Activated CD8-positive, alpha-beta memory T cell treated with anti-CD3 and anti-CD28 coated beads, Interleukin-2, amount 10 ng/mL, durations not matched to agents 7 days and 5 days (primary cell): ENCODE measurements at regions of chr12 and their contacts with region 1.

Region 1: DNA sequence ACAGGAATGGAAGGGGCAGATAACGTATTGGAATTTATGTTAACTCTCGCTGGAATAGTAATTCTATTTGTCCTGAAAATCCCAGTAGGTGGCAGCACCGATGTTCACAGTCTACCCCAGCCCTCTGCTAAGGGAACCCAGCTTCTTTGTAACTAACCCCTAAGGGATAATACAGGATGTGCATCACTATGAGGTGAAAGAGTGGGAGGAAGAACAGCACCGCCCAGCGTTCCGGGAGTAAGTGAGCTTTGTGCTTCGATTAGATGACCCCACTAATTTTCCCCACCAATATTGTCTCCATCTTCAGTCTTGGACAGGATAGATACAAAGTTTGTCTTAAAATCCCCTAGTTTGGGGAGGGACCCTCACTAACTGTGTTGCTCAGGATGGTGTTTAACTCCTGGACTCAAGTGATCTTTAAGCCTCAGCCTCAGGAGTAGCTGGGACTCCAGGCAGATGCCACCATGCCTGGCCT is 2.7 kb downstream of the SLC2A3 start:
- DNase-seq: peak; percentile 89
- ATAC-seq: peak; percentile 68
- H3K4me3 Mint-ChIP-seq: no peak overlapping the region
- H3K27ac Mint-ChIP-seq: no peak overlapping the region
- H3K4me1 Mint-ChIP-seq: peaks cover 32% of the 10 kb centered on the region
- H3K27me3 Mint-ChIP-seq: no peaks in the 10 kb centered on the region

Region 2: DNA sequence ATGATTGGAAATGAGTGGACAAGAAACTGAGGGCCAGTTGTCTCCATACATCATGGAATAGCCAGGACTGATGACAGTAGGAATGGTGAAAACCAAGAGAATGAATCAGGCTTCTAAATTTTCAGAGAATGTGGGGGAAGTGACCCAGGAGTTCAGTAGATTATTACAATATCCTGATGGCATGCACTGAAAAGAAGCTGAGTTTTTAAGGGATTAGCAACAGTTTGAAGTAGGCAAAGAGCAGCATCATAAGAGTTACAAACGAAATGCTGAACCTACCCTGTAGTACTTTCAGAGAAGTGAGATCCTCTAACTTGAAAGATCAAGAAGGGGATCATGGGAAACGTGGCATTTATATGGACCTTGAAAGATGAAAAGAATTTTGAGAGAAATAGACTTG is 73.7 kb before region 1 on chr12:
- CTCF ChIA-PET with region 1: interaction called, 12 read pairs
- DNase-seq: no peak
- ATAC-seq: no peak
- H3K4me3 Mint-ChIP-seq: no peak overlapping the region
- H3K27ac Mint-ChIP-seq: no peak overlapping the region
- H3K4me1 Mint-ChIP-seq: peaks cover 16% of the 10 kb centered on the region
- H3K27me3 Mint-ChIP-seq: peaks cover 21% of the 10 kb centered on the region

Region 3: DNA sequence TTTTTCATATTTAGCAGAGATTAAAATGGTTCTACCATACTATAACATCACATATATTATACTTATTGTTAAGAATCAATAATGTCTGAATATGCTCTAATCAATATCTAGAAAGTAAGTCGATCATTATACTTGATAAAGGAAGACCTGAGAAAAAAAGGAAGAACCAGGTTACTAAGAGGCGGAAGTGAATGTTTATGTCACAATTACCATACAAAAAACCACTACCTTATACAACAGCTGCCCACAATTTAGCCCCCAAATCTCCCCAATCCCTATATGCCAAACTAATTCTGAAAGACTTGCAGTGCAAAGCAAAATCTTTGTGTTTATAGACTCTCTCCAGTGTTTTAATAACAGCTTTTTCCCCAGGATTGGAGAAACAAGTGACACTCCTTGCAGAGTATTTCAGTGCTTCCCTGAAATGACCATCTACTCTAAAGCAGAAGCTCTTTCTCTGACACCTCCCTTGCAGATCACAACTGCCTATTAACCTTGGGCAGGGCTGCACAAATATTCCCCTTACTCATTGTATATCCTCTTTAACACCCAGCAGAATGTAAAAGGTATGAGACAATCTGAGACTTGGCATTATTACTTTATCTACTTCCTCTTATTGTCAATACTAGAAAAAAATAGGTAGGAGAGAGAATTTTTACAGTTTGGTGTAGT is 15.4 kb after region 1 on chr12:
- CTCF ChIA-PET with region 1: interaction called, 12 read pairs
- DNase-seq: no peak
- ATAC-seq: no peak
- H3K4me3 Mint-ChIP-seq: no peak overlapping the region
- H3K27ac Mint-ChIP-seq: peak overlapping the region; percentile 22
- H3K4me1 Mint-ChIP-seq: peaks cover 7% of the 10 kb centered on the region
- H3K27me3 Mint-ChIP-seq: no peaks in the 10 kb centered on the region

Region 4: DNA sequence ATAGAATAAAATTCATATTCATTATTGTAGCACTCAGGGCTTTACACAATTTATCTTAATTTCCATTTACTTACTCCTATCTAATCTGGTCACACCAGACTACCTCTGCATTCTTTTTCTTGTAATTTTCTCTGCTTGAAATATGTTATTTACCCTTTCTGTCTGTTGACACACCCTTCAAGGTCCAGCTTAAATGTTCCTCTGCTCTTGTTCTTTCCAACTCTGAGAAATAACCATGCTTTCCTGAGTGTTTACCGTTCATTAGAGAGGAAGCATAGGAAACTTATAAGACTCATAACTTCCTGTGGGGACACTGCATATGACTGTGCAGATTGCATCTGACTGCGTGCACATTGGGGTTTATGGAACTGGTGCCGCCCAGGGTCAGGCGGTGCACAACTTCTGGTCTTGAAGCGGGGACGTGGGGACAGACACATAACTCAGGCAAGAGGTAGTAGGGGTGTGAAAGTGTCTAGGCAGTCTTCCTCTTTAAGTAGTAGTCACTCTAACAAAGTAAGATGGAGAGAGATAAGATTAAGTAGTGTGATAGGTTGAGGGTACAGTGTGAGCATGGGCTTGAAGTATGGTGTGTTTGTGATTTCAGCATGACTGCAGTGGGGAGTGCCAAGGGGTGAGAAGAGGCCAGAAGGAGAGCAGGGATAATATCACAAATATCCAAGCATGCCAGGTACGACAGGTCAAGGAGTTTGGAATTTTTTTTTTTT is 56.7 kb after region 1 on chr12:
- CTCF ChIA-PET with region 1: interaction called, 78 read pairs
- DNase-seq: peak; percentile 95
- ATAC-seq: peak; percentile 95
- H3K4me3 Mint-ChIP-seq: peak overlapping the region; percentile 63
- H3K27ac Mint-ChIP-seq: peak overlapping the region; percentile 96
- H3K4me1 Mint-ChIP-seq: peaks cover 42% of the 10 kb centered on the region
- H3K27me3 Mint-ChIP-seq: no peaks in the 10 kb centered on the region

Region 5: DNA sequence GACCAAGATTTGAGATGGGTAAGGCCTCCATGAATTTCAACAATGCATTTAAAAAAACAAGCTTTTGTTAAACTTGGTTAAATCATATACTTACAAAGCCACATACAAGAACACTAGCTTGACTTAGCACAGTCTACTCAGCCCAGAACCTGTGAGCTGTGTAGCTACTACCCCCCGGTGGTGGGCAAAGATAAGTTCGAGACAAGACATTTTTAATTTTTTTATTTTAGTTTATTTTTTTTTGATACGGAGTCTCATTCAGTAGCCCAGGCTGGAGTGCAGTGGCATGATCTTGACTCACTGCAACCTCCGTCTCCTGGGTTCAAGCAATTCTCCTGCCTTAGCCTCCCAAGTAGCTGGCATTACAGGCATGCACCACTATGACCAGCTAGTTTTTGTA is 145.1 kb after region 1 on chr12:
- CTCF ChIA-PET with region 1: interaction called, 10 read pairs
- DNase-seq: peak; percentile 71
- ATAC-seq: no peak
- H3K4me3 Mint-ChIP-seq: no peak overlapping the region
- H3K27ac Mint-ChIP-seq: no peak overlapping the region
- H3K4me1 Mint-ChIP-seq: peaks cover 32% of the 10 kb centered on the region
- H3K27me3 Mint-ChIP-seq: no peaks in the 10 kb centered on the region